ENCODE measurements at regions of chr9 and their contacts with region 1.

Region 1: GRCh38 chr9:78296893-78297671 is at the start of gene PSAT1:
- DNase-seq: peak; percentile 92
- H3K4me3 ChIP-seq: peak within 1 kb of the TSS; percentile 52 to 65 (median 60)
- H3K27ac ChIP-seq: peak within 1 kb of the TSS; percentile 72 to 80 (median 76)
- H3K4me1 ChIP-seq: peaks cover 0 to 29% (median 27%) of the 10 kb centered on the region in 4 donors
- H3K27me3 ChIP-seq: peaks cover 0 to 19% (median 0%) of the 10 kb centered on the region in 3 donors
- CTCF ChIP-seq: no peak
- EP300 ChIP-seq: no peak
- POLR2A ChIP-seq: no peak
- total RNA-seq, gene PSAT1: 1.4 to 5.1 (median 2.5) TPM

Region 2: DNA sequence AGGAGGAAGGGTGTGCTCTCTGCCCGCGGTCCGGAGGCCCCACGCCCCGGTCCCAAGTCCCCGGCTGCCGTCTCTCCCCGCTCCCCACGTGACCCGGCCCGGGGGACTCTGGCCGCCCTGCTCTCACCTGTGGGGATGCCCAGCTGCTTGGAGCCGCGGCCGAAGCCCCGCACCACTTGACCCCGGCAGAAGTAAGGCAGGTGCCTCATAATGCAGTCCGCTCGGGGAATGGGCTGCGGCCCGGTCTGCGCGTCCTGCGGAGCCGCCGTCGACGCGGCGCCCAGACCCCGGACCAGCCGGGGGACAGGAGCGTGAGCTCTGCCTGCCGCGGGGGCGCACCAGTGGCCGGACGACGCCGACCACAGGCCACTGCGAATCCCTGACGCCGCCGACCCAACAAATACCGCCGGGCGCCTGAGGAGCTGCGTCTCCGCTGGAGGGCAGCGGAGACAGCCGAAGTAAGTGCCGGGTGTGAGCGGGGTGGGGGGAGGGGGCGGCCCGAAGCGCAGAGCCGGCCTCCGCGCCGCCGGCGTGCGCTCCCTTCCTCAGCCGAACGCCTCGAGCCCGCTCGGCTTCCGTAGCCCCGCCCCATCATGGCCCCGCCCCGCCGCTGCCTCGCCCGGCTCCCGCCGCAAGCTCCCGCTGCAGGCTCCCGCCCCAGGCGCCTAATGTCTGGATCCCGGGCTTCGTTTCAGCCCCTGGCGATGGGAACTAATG is 1903.0 kb before region 1 on chr9 and contains the start of gene RFK:
- intact Hi-C with region 1: loop called (anchors 10 kb)
- DNase-seq: peak; percentile 97
- H3K4me3 ChIP-seq: peak within 1 kb of the TSS; percentile 84 to 97 (median 88)
- H3K27ac ChIP-seq: peak within 1 kb of the TSS; percentile 89 to 97 (median 93)
- H3K4me1 ChIP-seq: peaks cover 0 to 22% (median 10%) of the 10 kb centered on the region in 4 donors
- H3K27me3 ChIP-seq: no peaks in the 10 kb centered on the region
- CTCF ChIP-seq: peak in 2 of 4 experiments; percentile 19 to 54
- EP300 ChIP-seq: no peak
- POLR2A ChIP-seq: peak; percentile 59 to 67
- total RNA-seq, gene RFK: 12.9 to 23.5 (median 21.6) TPM

Region 3: DNA sequence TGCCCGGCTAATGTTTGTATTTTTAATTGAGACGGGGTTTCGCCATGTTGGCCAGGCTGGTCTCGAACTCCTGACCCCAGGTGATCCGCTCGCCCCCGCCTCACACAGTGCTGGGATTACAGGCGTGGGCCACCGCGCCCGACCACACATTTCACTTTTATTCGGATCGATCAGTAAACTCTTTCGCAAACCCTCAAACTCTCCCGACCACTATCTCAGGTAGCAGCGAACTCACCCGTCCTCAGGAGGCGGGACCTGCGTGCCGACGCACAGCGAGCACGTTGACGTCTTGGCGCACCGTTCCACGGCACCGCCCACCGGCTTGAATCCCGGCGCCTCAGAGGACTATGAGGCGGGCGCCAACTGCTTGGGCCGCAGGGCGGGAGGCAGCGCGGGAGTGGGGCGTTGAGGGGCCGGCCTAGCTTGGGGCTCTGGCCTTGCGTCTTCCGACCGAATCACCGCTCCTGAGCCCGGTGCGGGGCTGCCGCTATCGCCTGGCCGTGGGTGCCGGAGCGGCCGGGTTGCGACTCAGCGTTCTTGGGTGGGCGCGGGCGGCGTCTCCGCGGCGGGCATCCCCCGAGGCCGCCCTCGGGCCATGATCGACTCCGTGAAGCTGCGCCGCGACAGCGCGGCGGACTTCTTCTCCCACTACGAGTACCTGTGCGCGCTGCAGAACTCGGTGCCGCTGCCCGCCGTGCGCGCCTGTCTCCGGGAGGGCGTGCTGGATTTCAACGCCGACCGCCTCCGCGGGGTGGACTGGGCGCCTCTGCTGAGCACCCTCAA is 61.1 kb before region 1 on chr9 and contains the start of gene CEP78:
- intact Hi-C with region 1: loop called (anchors 5 kb)
- DNase-seq: peak; percentile 95
- H3K4me3 ChIP-seq: peak within 1 kb of the TSS; percentile 67 to 89 (median 74)
- H3K27ac ChIP-seq: peak within 1 kb of the TSS; percentile 80 to 90 (median 83)
- H3K4me1 ChIP-seq: peaks cover 0 to 8% (median 7%) of the 10 kb centered on the region in 4 donors
- H3K27me3 ChIP-seq: no peaks in the 10 kb centered on the region
- CTCF ChIP-seq: no peak
- EP300 ChIP-seq: no peak
- POLR2A ChIP-seq: peak; percentile 24 to 30
- total RNA-seq, gene CEP78: 8.9 to 14.0 (median 12.3) TPM

Region 4: GRCh38 chr9:78261403-78262001 is 35.6 kb before region 1 on chr9:
- intact Hi-C with region 1: loop called (anchors 5 kb)
- DNase-seq: no peak
- H3K4me3 ChIP-seq: no peak overlapping the region
- H3K27ac ChIP-seq: no peak overlapping the region
- H3K4me1 ChIP-seq: no peaks in the 10 kb centered on the region
- H3K27me3 ChIP-seq: no peaks in the 10 kb centered on the region
- CTCF ChIP-seq: peak; percentile 29 to 68 (median 55)
- EP300 ChIP-seq: no peak
- POLR2A ChIP-seq: no peak